B cell (primary cell): ENCODE measurements at regions of chr16 and their contacts with region 1.

Region 1: DNA sequence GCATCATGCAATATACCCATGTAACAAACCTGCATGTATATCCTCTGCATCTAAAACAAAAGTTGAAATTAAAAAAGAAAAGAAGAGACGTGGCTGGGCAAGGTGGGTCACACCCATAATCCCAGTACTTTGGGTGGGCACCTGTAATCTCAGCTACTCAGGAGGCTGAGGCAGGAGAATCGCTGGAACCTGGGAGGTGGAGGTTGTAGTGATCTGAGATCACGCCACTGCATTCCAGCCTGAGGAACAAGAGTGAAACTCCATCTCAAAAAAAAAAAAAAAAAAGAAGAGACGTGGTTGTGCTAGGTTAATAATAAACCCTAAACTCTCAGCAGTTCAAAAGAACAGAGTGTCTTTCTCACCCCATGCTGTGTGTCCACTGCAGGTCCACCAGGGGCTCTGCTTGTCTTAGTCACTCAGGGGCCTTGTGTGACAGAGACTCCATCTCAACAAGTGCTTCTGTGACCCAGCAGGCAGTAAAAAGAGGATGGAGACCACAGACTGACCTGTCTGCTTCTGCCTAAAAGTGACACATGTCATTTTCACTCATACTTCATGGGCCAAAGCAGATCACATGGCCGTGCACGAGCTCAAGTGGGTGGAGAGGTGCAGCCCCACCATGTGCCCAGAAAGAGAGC is 22.3 kb upstream of the N4BP1 start:
- DNase-seq: no peak
- ATAC-seq: no peak
- H3K4me3 ChIP-seq: no peak overlapping the region
- H3K4me3 Mint-ChIP-seq: no peak overlapping the region
- H3K27ac ChIP-seq: no peak overlapping the region
- H3K27ac Mint-ChIP-seq: no peak overlapping the region
- H3K4me1 ChIP-seq: peaks cover 0 to 7% of the 10 kb centered on the region in 2 donors
- H3K4me1 Mint-ChIP-seq: peaks cover 6% of the 10 kb centered on the region
- H3K27me3 ChIP-seq: no peaks in the 10 kb centered on the region
- H3K27me3 Mint-ChIP-seq: peaks cover 19% of the 10 kb centered on the region
- CTCF ChIP-seq: no peak

Region 2: GRCh38 chr16:48231727-48232492 is 400.3 kb before region 1 on chr16:
- CTCF ChIA-PET with region 1: interaction called, 11 read pairs
- POLR2A ChIA-PET with region 1: no interaction called
- intact Hi-C with region 1: no loop called
- DNase-seq: peak; percentile 21
- ATAC-seq: no peak
- H3K4me3 ChIP-seq: no peak overlapping the region
- H3K4me3 Mint-ChIP-seq: no peak overlapping the region
- H3K27ac ChIP-seq: no peak overlapping the region
- H3K27ac Mint-ChIP-seq: no peak overlapping the region
- H3K4me1 ChIP-seq: no peaks in the 10 kb centered on the region
- H3K4me1 Mint-ChIP-seq: no peaks in the 10 kb centered on the region
- H3K27me3 ChIP-seq: peaks cover 0 to 3% (median 0%) of the 10 kb centered on the region in 4 experiments
- H3K27me3 Mint-ChIP-seq: peaks cover 17% of the 10 kb centered on the region
- CTCF ChIP-seq: peak; percentile 22

Region 3: GRCh38 chr16:48617711-48618148 is 14.5 kb before region 1 on chr16:
- CTCF ChIA-PET with region 1: interaction called, 17 read pairs
- POLR2A ChIA-PET with region 1: no interaction called
- intact Hi-C with region 1: no loop called
- DNase-seq: no peak
- ATAC-seq: no peak
- H3K4me3 ChIP-seq: no peak overlapping the region
- H3K4me3 Mint-ChIP-seq: no peak overlapping the region
- H3K27ac ChIP-seq: no peak overlapping the region
- H3K27ac Mint-ChIP-seq: no peak overlapping the region
- H3K4me1 ChIP-seq: peaks cover 21 to 23% of the 10 kb centered on the region in 2 donors
- H3K4me1 Mint-ChIP-seq: peaks cover 20% of the 10 kb centered on the region
- H3K27me3 ChIP-seq: peaks cover 0 to 4% (median 0%) of the 10 kb centered on the region in 4 experiments
- H3K27me3 Mint-ChIP-seq: peaks cover 11% of the 10 kb centered on the region
- CTCF ChIP-seq: no peak

Region 4: GRCh38 chr16:48676836-48677235 is 44.6 kb after region 1 on chr16:
- CTCF ChIA-PET with region 1: no interaction called
- POLR2A ChIA-PET with region 1: no interaction called
- intact Hi-C with region 1: no loop called
- DNase-seq: no peak
- ATAC-seq: no peak
- H3K4me3 ChIP-seq: no peak overlapping the region
- H3K4me3 Mint-ChIP-seq: no peak overlapping the region
- H3K27ac ChIP-seq: no peak overlapping the region
- H3K27ac Mint-ChIP-seq: no peak overlapping the region
- H3K4me1 ChIP-seq: no peaks in the 10 kb centered on the region
- H3K4me1 Mint-ChIP-seq: no peaks in the 10 kb centered on the region
- H3K27me3 ChIP-seq: peaks cover 0 to 3% (median 0%) of the 10 kb centered on the region in 4 experiments
- H3K27me3 Mint-ChIP-seq: peaks cover 25% of the 10 kb centered on the region
- CTCF ChIP-seq: no peak

Region 5: GRCh38 chr16:49061137-49061714 is 429.0 kb after region 1 on chr16:
- CTCF ChIA-PET with region 1: no interaction called
- POLR2A ChIA-PET with region 1: no interaction called
- intact Hi-C with region 1: no loop called
- DNase-seq: no peak
- ATAC-seq: no peak
- H3K4me3 ChIP-seq: no peak overlapping the region
- H3K4me3 Mint-ChIP-seq: no peak overlapping the region
- H3K27ac ChIP-seq: no peak overlapping the region
- H3K27ac Mint-ChIP-seq: no peak overlapping the region
- H3K4me1 ChIP-seq: no peaks in the 10 kb centered on the region
- H3K4me1 Mint-ChIP-seq: peaks cover 2% of the 10 kb centered on the region
- H3K27me3 ChIP-seq: no peaks in the 10 kb centered on the region
- H3K27me3 Mint-ChIP-seq: peaks cover 7% of the 10 kb centered on the region
- CTCF ChIP-seq: no peak